GM12878 (cell line): ENCODE measurements at regions of chr20 and their contacts with region 1.

Region 1: DNA sequence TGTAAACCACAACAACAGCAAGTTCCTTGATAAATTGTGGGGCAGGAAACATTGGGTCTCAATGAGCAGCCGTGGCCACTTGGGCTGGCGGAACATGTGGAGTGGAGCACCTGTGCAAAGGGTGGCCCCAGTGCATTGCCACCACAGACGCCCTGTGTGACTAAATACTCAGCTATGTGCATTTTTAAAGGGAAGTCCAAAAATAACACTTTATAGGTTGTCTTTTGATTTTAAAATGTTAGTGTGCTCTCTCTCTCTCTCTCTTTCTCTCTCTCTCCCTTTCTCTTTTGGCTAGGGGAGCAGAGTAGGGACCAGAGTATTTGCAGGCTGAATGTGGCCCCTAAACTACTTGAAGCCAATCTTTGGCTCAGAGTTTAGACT is 236.3 kb downstream of the BCAS1 start:
- DNase-seq: no peak
- ATAC-seq: peak; percentile 64
- H3K4me3 ChIP-seq: no peak overlapping the region
- H3K27ac ChIP-seq: peak overlapping the region; percentile 69
- H3K4me1 ChIP-seq: peaks cover 42% of the 10 kb centered on the region
- H3K27me3 ChIP-seq: no peaks in the 10 kb centered on the region
- CTCF ChIP-seq: no peak
- EP300 ChIP-seq: no peak; a peak in 1 of 4 replicates
- POLR2A ChIP-seq: 0 out of 2 replicates have a peak, but pooled peaks have one; percentile 21
- RAD21 ChIP-seq: peak; percentile 14; the same call in 1 of the 2 replicates

Region 2: GRCh38 chr20:53847129-53847836 is 13.2 kb after region 1 on chr20:
- CTCF ChIA-PET with region 1: interaction called, 4 read pairs
- POLR2A ChIA-PET with region 1: interaction called, 14 read pairs
- RAD21 ChIA-PET with region 1: interaction called, 10 read pairs
- SMC1A ChIA-PET with region 1: interaction called, 16 read pairs
- in situ Hi-C with region 1: no loop called
- intact Hi-C with region 1: no loop called
- DNase-seq: no peak
- ATAC-seq: peak; percentile 58
- H3K4me3 ChIP-seq: no peak overlapping the region; the same call in 1 of the 2 replicates
- H3K27ac ChIP-seq: peak overlapping the region; percentile 79
- H3K4me1 ChIP-seq: peaks cover 26% of the 10 kb centered on the region
- H3K27me3 ChIP-seq: no peaks in the 10 kb centered on the region
- CTCF ChIP-seq: no peak
- EP300 ChIP-seq: no peak
- POLR2A ChIP-seq: no peak
- RAD21 ChIP-seq: no peak